ENCODE measurements at regions of chr12 and their contacts with region 1.

Region 1: DNA sequence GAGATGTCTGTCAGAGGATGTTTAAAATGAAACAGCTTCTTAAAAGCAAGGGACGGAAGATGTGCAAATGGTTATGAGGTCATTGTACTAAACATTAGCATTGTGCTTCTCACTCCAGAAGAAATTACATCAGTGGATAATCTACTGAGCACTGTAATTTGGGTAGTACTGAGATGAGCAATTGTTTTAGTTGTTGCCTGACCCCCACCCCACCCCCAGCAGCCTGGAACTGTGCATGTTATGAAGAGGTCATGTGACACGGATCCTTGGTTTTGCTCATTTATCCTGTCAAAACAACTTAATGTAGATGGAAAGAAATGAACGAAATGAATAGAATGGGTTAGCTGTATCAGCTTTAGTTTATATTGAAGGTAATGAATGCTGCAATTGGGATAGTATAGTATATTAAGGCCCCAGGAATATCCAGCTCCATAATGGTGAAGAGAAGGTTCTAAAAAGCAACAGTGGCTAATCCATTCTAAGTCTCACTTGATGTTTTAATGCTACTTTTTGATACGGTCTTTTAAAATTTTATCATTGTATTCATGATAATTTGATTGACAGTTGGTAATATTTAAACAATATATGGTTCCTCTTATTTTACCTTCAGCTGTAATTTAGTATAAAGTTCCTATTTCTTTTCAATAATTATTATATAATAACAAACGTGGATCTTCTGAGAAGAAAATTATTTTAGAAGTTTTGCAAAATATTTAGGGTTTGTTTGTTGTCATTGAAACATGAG is 58.5 kb downstream of the WNK1 start:
- H3K4me3 Mint-ChIP-seq: no peak overlapping the region
- H3K27ac Mint-ChIP-seq: no peak overlapping the region
- H3K4me1 Mint-ChIP-seq: peaks cover 36% of the 10 kb centered on the region
- H3K27me3 Mint-ChIP-seq: no peaks in the 10 kb centered on the region

Region 2: GRCh38 chr12:318759-319515 is 491.9 kb before region 1 on chr12:
- intact Hi-C with region 1: no loop called
- H3K4me3 Mint-ChIP-seq: no peak overlapping the region
- H3K27ac Mint-ChIP-seq: peak overlapping the region; percentile 7
- H3K4me1 Mint-ChIP-seq: peaks cover 14% of the 10 kb centered on the region
- H3K27me3 Mint-ChIP-seq: no peaks in the 10 kb centered on the region

Region 3: DNA sequence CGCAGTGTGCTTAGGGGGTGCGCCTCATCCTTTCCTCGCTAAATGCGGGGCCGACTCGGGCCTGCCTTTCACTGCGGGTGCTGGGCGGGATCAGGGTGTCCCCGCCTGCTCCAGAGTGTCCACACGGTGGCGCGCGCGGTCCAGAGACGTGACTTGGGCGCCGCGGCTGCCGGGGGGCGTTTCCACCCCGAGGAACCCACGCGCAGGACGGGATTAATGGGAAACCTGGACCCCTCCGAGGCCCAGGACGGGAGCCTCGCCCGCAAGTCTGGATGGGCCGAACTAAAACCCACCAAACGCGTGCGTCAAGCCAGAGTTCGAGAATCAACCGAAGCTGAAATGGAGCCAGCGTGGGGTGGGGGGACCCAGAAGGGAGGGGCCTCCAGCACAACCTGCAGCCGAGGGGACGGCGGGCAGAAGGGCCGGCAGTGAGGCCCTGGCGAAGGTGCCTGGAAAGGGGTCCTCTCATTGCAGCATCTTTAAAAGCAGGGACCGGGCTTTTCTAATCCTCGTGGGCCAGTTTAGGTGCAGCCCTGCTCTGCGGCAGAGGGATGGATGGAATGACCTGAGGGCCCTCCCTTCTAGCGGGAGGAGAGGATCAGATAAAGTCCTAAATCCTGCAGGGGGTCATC is 240.9 kb before region 1 on chr12:
- intact Hi-C with region 1: loop called (anchors 2 kb)
- H3K4me3 Mint-ChIP-seq: peak overlapping the region; percentile 76
- H3K27ac Mint-ChIP-seq: peak overlapping the region; percentile 31
- H3K4me1 Mint-ChIP-seq: peaks cover 32% of the 10 kb centered on the region
- H3K27me3 Mint-ChIP-seq: peaks cover 5% of the 10 kb centered on the region

Region 4: DNA sequence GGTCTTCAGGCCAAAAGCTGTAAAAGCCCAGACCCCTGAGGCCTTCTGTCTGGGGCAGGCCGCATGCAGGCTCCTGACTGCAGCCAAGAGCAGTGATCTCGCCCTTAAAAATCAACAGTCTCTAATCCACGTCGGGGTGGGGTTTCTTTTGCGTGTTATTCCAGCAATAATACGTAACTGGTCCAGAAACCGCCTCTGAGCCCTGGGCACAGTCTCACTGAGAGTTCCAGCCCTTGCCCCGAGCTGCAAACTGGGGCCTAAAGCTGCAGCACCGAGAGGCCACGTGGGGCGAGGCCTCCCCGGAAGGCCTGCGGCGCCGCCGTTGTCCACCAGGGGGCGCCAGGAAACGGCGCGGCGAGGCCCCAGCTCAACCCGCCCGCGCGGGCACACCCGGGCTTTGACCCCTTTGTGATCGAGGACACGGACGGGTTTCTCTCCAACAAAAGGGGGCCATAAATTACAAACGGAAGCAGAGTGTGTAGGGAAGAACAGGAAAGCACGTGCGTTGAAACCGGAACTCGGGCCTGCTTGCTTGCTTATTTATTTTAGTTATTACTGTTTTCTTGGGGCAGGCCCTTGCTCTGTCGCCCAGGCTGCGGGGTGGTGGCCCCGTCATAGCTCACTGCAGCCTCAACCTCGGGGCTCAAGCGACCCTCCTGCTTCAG is 234.8 kb before region 1 on chr12:
- intact Hi-C with region 1: loop called (anchors 2 kb)
- H3K4me3 Mint-ChIP-seq: peak overlapping the region; percentile 66
- H3K27ac Mint-ChIP-seq: peak overlapping the region; percentile 85
- H3K4me1 Mint-ChIP-seq: peaks cover 33% of the 10 kb centered on the region
- H3K27me3 Mint-ChIP-seq: peaks cover 2% of the 10 kb centered on the region

Region 5: DNA sequence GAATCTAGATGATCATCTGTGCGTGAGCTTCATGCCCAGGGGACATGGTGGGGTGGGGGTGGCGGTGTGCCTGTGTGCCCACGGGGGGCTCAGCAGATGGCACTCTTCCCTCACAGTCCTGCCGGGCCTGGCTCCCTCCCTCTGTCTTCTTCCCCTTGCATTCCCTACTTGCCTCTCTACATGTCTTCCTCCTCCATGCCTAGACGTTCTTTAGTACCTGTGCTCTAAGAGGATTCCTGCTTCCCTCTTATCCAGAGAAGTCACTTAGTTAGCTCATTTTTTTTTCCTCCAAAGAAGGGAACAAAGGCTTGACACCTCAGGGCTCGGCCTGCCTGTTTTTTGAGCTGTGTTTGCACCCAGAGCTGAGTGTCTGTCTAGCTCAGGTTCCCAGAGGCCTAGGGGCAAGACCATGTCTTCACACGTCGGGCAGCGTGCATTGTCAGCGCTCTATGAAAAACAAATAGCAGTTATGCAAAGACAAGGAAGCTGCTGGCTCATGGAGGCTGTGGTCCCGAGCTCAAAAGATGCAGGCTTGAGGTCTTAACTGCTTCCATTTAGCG is 196.4 kb before region 1 on chr12:
- intact Hi-C with region 1: loop called (anchors 10 kb)
- H3K4me3 Mint-ChIP-seq: no peak overlapping the region
- H3K27ac Mint-ChIP-seq: peak overlapping the region; percentile 45
- H3K4me1 Mint-ChIP-seq: peaks cover 95% of the 10 kb centered on the region
- H3K27me3 Mint-ChIP-seq: no peaks in the 10 kb centered on the region

Region 6: GRCh38 chr12:630656-631632 is 179.9 kb before region 1 on chr12:
- intact Hi-C with region 1: loop called (anchors 10 kb)
- H3K4me3 Mint-ChIP-seq: peak overlapping the region; percentile 98
- H3K27ac Mint-ChIP-seq: peak overlapping the region; percentile 95
- H3K4me1 Mint-ChIP-seq: peaks cover 61% of the 10 kb centered on the region
- H3K27me3 Mint-ChIP-seq: no peaks in the 10 kb centered on the region

Region 7: DNA sequence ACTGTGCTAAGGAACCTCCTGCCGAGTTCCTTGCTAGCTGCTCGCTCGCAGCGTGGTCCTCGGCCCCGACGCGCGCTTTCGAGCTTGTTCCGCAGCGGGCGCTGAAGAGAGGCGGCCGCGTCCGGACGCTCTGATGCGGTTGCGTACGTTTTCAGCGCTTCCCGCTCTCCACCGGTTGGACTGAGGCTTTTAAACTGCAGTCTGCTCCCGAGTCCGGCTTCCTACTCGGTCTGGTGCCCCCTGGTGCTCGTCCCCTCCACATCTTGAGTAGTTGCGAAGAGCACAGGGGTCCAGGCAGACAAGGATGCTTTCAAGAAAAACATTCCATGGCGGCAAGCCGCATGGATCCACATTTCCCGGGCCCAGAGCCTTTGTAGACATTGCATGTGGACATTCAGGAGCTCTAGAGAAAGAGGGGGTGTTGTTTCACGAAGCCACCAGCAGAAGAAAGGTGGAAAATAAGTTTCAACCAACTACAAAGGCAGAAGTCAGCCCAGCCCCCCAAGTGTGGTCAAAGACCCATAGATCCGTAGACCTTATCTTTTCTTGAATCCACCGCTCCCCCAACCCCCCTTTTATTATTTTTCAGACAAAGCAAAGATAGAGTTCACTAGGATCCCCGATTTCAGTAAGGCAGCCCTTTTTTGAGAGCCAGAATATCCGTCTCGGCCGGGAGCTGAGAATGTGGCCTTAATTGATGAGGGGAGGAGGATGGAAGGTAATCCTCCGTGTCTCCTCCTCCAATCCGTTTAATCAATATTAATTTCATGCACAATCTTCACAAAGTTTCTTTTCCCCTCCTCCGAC is 59.4 kb before region 1 on chr12:
- intact Hi-C with region 1: loop called (anchors 5 kb)
- H3K4me3 Mint-ChIP-seq: no peak overlapping the region
- H3K27ac Mint-ChIP-seq: no peak overlapping the region
- H3K4me1 Mint-ChIP-seq: peaks cover 17% of the 10 kb centered on the region
- H3K27me3 Mint-ChIP-seq: no peaks in the 10 kb centered on the region

Region 8: GRCh38 chr12:774051-774614 is 36.7 kb before region 1 on chr12:
- intact Hi-C with region 1: loop called (anchors 5 kb)
- H3K4me3 Mint-ChIP-seq: no peak overlapping the region
- H3K27ac Mint-ChIP-seq: peak overlapping the region; percentile 66
- H3K4me1 Mint-ChIP-seq: peaks cover 49% of the 10 kb centered on the region
- H3K27me3 Mint-ChIP-seq: no peaks in the 10 kb centered on the region

Region 9: GRCh38 chr12:916240-916639 is 105.4 kb after region 1 on chr12:
- intact Hi-C with region 1: no loop called
- H3K4me3 Mint-ChIP-seq: no peak overlapping the region
- H3K27ac Mint-ChIP-seq: peak overlapping the region; percentile 12
- H3K4me1 Mint-ChIP-seq: peaks cover 28% of the 10 kb centered on the region
- H3K27me3 Mint-ChIP-seq: no peaks in the 10 kb centered on the region

Measured in dendritic cell treated with granulocyte-macrophage colony-stimulating factor and Interleukin-4, amounts not matched to agents 40 ng/mL and 50 ng/mL, for 4 days (primary cell).